Activated CD4-positive, alpha-beta T cell treated with anti-CD3 and anti-CD28 coated beads for 36 hours (primary cell): ENCODE measurements at regions of chr5 and their contacts with region 1.

Region 1: GRCh38 chr5:153964880-153965645 is 73.6 kb downstream of the FAM114A2 start:
- DNase-seq: peak; percentile 65
- ATAC-seq: peak; percentile 68
- H3K4me3 Mint-ChIP-seq: no peak overlapping the region
- H3K27ac Mint-ChIP-seq: no peak overlapping the region
- H3K4me1 Mint-ChIP-seq: peaks cover 6% of the 10 kb centered on the region
- H3K27me3 Mint-ChIP-seq: peaks cover 4% of the 10 kb centered on the region

Region 2: DNA sequence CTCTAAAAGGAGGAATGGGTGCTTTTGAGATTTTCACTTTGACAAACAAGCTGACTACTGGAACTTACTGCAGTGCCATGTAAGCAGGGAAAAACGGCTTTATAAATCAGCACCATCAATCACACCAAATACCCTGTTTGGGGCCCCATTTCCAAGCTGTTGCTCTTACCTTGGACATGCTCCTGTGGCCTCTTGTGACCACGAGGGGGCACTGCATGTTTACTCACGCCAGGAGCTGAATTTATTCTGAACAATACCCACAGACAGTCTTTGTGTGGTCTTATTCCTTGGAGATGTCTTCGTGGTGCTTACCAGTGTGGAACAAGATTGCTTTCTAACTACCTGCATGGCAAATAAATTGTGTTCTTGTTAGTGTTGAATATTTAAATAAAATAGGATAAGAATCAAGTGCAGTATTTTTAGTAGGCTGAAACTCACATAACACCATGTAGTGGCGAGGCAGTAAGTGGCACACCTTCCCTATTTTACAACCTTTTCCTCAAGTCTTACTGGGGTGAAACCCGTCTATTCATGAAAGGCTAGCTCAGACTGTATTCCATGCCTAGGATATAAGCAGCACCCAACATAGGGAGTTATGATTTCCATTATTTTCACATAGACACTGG is 1404.4 kb before region 1 on chr5:
- CTCF ChIA-PET with region 1: interaction called, 7 read pairs
- POLR2A ChIA-PET with region 1: no interaction called
- intact Hi-C with region 1: loop called (anchors 1 to 2 kb)
- DNase-seq: peak; percentile 66
- ATAC-seq: no peak
- H3K4me3 Mint-ChIP-seq: no peak overlapping the region
- H3K27ac Mint-ChIP-seq: no peak overlapping the region
- H3K4me1 Mint-ChIP-seq: no peaks in the 10 kb centered on the region
- H3K27me3 Mint-ChIP-seq: no peaks in the 10 kb centered on the region

Region 3: DNA sequence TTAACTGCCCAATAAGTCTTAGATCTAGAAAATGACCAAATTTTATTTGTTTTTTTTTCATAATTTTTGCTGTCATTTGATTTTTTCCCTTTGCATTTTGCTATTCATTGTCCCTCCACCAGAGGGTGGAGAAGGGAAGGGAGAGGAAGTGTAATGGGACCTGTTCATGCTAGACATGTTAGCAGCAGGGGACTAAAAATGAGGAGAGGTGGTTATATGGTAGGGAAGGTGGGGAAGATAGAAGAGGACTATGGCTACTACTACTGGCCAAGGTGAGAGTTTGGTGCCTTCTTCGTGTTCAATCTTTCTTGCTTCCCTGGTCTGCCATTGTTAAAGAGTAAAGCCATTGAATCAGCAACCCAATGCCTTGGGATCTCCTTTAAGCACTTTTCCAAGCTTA is 468.2 kb before region 1 on chr5:
- CTCF ChIA-PET with region 1: interaction called, 4 read pairs
- POLR2A ChIA-PET with region 1: no interaction called
- intact Hi-C with region 1: loop called (anchors 1 to 10 kb)
- DNase-seq: no peak
- ATAC-seq: no peak
- H3K4me3 Mint-ChIP-seq: no peak overlapping the region
- H3K27ac Mint-ChIP-seq: no peak overlapping the region
- H3K4me1 Mint-ChIP-seq: no peaks in the 10 kb centered on the region
- H3K27me3 Mint-ChIP-seq: peaks cover 8% of the 10 kb centered on the region

Region 4: GRCh38 chr5:154320224-154321089 is 355.4 kb after region 1 on chr5:
- CTCF ChIA-PET with region 1: no interaction called
- POLR2A ChIA-PET with region 1: no interaction called
- intact Hi-C with region 1: no loop called
- DNase-seq: no peak
- ATAC-seq: no peak
- H3K4me3 Mint-ChIP-seq: no peak overlapping the region
- H3K27ac Mint-ChIP-seq: no peak overlapping the region
- H3K4me1 Mint-ChIP-seq: peaks cover 6% of the 10 kb centered on the region
- H3K27me3 Mint-ChIP-seq: no peaks in the 10 kb centered on the region

Region 5: GRCh38 chr5:154603978-154604679 is 639.1 kb after region 1 on chr5:
- CTCF ChIA-PET with region 1: no interaction called
- POLR2A ChIA-PET with region 1: no interaction called
- intact Hi-C with region 1: no loop called
- DNase-seq: peak; percentile 16
- ATAC-seq: no peak
- H3K4me3 Mint-ChIP-seq: no peak overlapping the region
- H3K27ac Mint-ChIP-seq: no peak overlapping the region
- H3K4me1 Mint-ChIP-seq: no peaks in the 10 kb centered on the region
- H3K27me3 Mint-ChIP-seq: peaks cover 41% of the 10 kb centered on the region